Activated T-helper 1 cell treated with anti-CD3 and anti-CD28 coated beads, Interleukin-12 subunit alpha, Interleukin-12 subunit beta, Interleukin-2, Interleukin-4 antibody, amounts not matched to agents 30 ng/mL and 10 ng/mL and 1 ng/mL, durations not matched to agents 14 hours and 24 hours and 36 hours (primary cell): ENCODE measurements at regions of chr2 and their contacts with region 1.

Region 1: GRCh38 chr2:102442967-102443828 is 20.2 kb downstream of the IL18RAP start:
- DNase-seq: peak; percentile 38
- H3K4me3 Mint-ChIP-seq: peak overlapping the region; percentile 56
- H3K27ac Mint-ChIP-seq: peak overlapping the region; percentile 72
- H3K4me1 Mint-ChIP-seq: peaks cover 19% of the 10 kb centered on the region
- H3K27me3 Mint-ChIP-seq: no peaks in the 10 kb centered on the region

Region 2: GRCh38 chr2:102355526-102356380 is 87.4 kb before region 1 on chr2 and contains the start of gene IL18R1:
- intact Hi-C with region 1: loop called (anchors 1 kb)
- DNase-seq: peak; percentile 71
- H3K4me3 Mint-ChIP-seq: peak within 1 kb of the TSS; percentile 97
- H3K27ac Mint-ChIP-seq: peak within 1 kb of the TSS; percentile 96
- H3K4me1 Mint-ChIP-seq: peaks cover 47% of the 10 kb centered on the region
- H3K27me3 Mint-ChIP-seq: no peaks in the 10 kb centered on the region
- total RNA-seq, gene IL18R1: 57.8 and 61.3 TPM in 2 replicates

Region 3: DNA sequence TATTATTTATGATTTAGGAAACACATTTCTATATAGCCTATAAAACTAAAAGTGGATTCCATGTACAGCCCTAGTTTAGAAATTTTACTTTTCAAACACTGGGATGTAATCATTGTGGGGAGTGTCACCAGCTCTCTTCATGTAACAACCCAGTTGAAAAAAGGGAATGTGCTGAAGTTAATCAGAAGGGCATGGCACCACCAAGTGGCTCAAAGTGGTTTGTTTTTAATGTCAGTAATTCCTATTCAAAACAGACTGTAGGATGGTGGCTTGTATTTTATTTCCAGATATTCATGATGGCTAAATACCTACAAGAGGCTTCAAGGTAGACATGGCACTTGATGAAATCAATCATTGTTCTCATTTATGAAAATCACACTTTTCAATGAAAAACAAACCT is 260.6 kb after region 1 on chr2:
- intact Hi-C with region 1: no loop called
- DNase-seq: no peak
- H3K4me3 Mint-ChIP-seq: no peak overlapping the region
- H3K27ac Mint-ChIP-seq: no peak overlapping the region
- H3K4me1 Mint-ChIP-seq: no peaks in the 10 kb centered on the region
- H3K27me3 Mint-ChIP-seq: peaks cover 17% of the 10 kb centered on the region